Caco-2 (cell line): ENCODE measurements at regions of chr5 and their contacts with region 1.

Region 1: GRCh38 chr5:59126708-59127573 is 544.1 kb downstream of the RAB3C start:
- DNase-seq: peak; percentile 60 to 68
- H3K4me3 ChIP-seq: peak overlapping the region; percentile 30
- H3K4me3 Mint-ChIP-seq: no peak overlapping the region
- H3K27ac Mint-ChIP-seq: no peak overlapping the region
- H3K4me1 ChIP-seq: peaks cover 88% of the 10 kb centered on the region
- H3K4me1 Mint-ChIP-seq: peaks cover 7% of the 10 kb centered on the region
- H3K27me3 ChIP-seq: no peaks in the 10 kb centered on the region
- H3K27me3 Mint-ChIP-seq: no peaks in the 10 kb centered on the region
- CTCF ChIP-seq: no peak

Region 2: DNA sequence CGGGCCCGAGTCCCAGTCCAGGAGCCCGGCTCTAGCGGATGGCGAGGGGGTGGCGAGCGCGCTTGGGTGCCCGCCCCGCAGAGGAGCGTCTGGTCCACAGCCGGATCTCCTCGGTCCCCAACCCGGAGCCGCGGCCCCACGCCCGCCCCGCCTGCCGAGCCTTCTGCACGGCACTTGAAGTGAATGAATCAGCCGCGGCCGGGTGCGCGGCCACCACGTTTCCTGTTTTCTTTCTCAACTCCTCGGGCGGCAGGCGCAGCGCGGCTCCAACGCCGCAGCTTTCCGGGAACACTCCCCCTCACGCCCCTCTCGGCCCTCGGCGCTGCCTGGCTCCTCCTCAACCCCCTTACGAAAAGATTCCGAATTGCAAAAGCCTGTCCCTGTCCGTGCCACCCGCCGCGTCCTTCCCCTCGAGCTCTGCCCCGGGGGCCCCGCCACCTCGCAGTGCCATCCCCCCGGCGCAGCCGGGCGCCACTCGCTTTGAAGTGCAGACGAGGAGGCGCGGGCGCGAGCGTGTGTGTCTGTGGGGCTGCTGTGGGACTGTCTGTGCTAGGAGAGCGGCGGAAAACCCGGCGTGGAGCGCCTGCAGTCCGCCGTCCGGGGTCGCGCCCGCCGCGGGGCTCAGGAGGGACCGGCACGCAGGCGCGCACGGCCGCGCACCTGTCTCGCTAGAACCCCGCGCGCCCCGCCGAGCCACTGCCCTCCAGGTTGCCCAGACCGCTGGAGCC is 87.5 kb before region 1 on chr5:
- CTCF ChIA-PET with region 1: interaction called, 13 read pairs
- POLR2A ChIA-PET with region 1: interaction called, 5 read pairs
- intact Hi-C with region 1: loop called (anchors 1 kb)
- DNase-seq: peak; percentile 78 to 80
- H3K4me3 ChIP-seq: peak overlapping the region; percentile 95
- H3K4me3 Mint-ChIP-seq: peak overlapping the region; percentile 69
- H3K27ac Mint-ChIP-seq: peak overlapping the region; percentile 10
- H3K4me1 ChIP-seq: peaks cover 39% of the 10 kb centered on the region
- H3K4me1 Mint-ChIP-seq: peaks cover 17% of the 10 kb centered on the region
- H3K27me3 ChIP-seq: no peaks in the 10 kb centered on the region
- H3K27me3 Mint-ChIP-seq: no peaks in the 10 kb centered on the region
- CTCF ChIP-seq: no peak

Region 3: GRCh38 chr5:59051938-59052337 is 75.0 kb before region 1 on chr5:
- CTCF ChIA-PET with region 1: no interaction called
- POLR2A ChIA-PET with region 1: interaction called, 12 read pairs
- intact Hi-C with region 1: no loop called
- DNase-seq: no peak
- H3K4me3 ChIP-seq: no peak overlapping the region
- H3K4me3 Mint-ChIP-seq: no peak overlapping the region
- H3K27ac Mint-ChIP-seq: no peak overlapping the region
- H3K4me1 ChIP-seq: peaks cover 29% of the 10 kb centered on the region
- H3K4me1 Mint-ChIP-seq: peaks cover 32% of the 10 kb centered on the region
- H3K27me3 ChIP-seq: no peaks in the 10 kb centered on the region
- H3K27me3 Mint-ChIP-seq: no peaks in the 10 kb centered on the region
- CTCF ChIP-seq: no peak

Region 4: DNA sequence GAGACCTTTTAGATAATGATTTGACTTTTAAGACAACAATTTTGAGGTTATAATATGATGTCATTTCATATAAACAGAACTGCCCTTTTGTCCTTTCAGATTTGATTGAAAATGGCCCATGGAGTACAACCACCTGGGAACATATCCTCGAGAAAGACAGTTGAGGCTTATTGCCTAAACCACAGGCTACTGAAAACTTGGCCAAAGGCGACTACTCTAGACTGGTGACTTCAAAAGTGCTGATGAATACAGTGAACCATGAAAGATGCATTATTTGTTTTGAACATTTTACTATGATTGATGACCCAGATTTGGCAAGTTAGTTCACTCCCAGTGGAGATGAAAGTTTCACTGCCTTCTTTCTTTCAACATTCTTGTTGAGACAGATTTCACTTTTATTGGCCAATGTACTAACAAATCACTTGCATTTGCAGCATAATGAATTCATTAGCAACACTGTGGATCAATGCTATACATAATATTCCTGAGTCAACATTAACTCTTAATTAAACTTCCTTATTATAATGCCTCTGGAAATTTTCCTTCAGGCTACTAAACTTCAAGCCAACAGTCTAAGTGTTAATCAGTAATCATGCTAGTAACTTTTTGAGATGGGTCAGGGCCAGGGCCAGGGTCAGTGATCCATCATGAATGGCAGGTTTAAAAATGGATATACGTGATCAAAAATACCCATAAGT is 63.8 kb before region 1 on chr5:
- CTCF ChIA-PET with region 1: no interaction called
- POLR2A ChIA-PET with region 1: interaction called, 5 read pairs
- intact Hi-C with region 1: loop called (anchors 2 kb)
- DNase-seq: peak in 1 of 2 experiments; percentile 25
- H3K4me3 ChIP-seq: no peak overlapping the region
- H3K4me3 Mint-ChIP-seq: no peak overlapping the region
- H3K27ac Mint-ChIP-seq: no peak overlapping the region
- H3K4me1 ChIP-seq: peaks cover 34% of the 10 kb centered on the region
- H3K4me1 Mint-ChIP-seq: peaks cover 36% of the 10 kb centered on the region
- H3K27me3 ChIP-seq: no peaks in the 10 kb centered on the region
- H3K27me3 Mint-ChIP-seq: no peaks in the 10 kb centered on the region
- CTCF ChIP-seq: no peak

Region 5: DNA sequence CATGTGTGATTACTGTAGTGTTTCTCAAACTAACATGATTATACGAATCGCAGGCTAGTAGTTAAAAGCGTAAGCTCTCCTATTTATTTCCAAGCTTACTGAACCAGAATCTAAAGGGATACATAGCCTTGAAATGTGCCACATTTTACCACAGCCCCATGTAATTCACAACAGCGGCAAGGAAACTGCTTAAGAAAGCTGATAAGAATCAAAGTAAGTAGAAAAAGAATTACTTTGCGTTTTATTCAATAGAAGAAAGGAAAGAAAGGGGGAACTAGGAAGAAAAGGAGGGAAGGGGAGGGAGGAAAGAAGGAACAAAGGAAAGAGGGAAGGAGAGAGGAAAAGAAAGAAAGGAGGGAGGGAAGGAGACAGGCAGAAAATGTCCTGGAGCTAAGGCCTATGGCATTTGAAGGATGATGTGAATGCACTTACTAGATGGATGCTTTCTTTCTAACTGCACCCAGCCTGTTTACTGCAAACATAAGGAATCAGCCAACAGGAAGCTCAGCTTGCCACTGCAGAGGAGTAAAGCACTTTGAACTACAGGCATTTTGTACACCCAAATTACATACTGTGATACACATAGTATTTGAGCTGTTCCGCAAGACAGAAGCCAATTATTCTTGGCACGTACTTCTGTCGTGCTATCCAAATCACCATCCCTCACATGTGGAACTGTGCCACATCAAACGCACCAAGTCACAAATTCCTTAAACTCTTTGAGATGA is 22.4 kb before region 1 on chr5:
- CTCF ChIA-PET with region 1: no interaction called
- POLR2A ChIA-PET with region 1: no interaction called
- intact Hi-C with region 1: loop called (anchors 2 kb)
- DNase-seq: no peak
- H3K4me3 ChIP-seq: no peak overlapping the region
- H3K4me3 Mint-ChIP-seq: no peak overlapping the region
- H3K27ac Mint-ChIP-seq: peak overlapping the region; percentile 33
- H3K4me1 ChIP-seq: peaks cover 27% of the 10 kb centered on the region
- H3K4me1 Mint-ChIP-seq: peaks cover 30% of the 10 kb centered on the region
- H3K27me3 ChIP-seq: no peaks in the 10 kb centered on the region
- H3K27me3 Mint-ChIP-seq: no peaks in the 10 kb centered on the region
- CTCF ChIP-seq: no peak

Region 6: GRCh38 chr5:59161221-59162105 is 34.5 kb after region 1 on chr5:
- CTCF ChIA-PET with region 1: interaction called, 5 read pairs
- POLR2A ChIA-PET with region 1: interaction called, 18 read pairs
- intact Hi-C with region 1: loop called (anchors 1 kb)
- DNase-seq: peak; percentile 80 to 83
- H3K4me3 ChIP-seq: peak overlapping the region; percentile 1; the same call in 1 of the 2 replicates
- H3K4me3 Mint-ChIP-seq: peak overlapping the region; percentile 72
- H3K27ac Mint-ChIP-seq: peak overlapping the region; percentile 89
- H3K4me1 ChIP-seq: peaks cover 60% of the 10 kb centered on the region
- H3K4me1 Mint-ChIP-seq: peaks cover 34% of the 10 kb centered on the region
- H3K27me3 ChIP-seq: no peaks in the 10 kb centered on the region
- H3K27me3 Mint-ChIP-seq: no peaks in the 10 kb centered on the region
- CTCF ChIP-seq: no peak

Region 7: GRCh38 chr5:60295423-60295822 is 1168.5 kb after region 1 on chr5:
- CTCF ChIA-PET with region 1: no interaction called
- POLR2A ChIA-PET with region 1: no interaction called
- intact Hi-C with region 1: no loop called
- DNase-seq: peak; percentile 39 to 40
- H3K4me3 ChIP-seq: no peak overlapping the region
- H3K4me3 Mint-ChIP-seq: no peak overlapping the region
- H3K27ac Mint-ChIP-seq: no peak overlapping the region
- H3K4me1 ChIP-seq: no peaks in the 10 kb centered on the region
- H3K4me1 Mint-ChIP-seq: no peaks in the 10 kb centered on the region
- H3K27me3 ChIP-seq: no peaks in the 10 kb centered on the region
- H3K27me3 Mint-ChIP-seq: no peaks in the 10 kb centered on the region
- CTCF ChIP-seq: peak; percentile 61 to 70